Sigmoid colon (tissue), 7 donors: ENCODE measurements at regions of chr19 and their contacts with region 1.

Region 1: GRCh38 chr19:1651568-1652291 is 685 bp downstream of the TCF3 start:
- DNase-seq: peak; percentile 82
- H3K4me3 ChIP-seq: peak overlapping the region; percentile 49 to 98 (median 97)
- H3K27ac ChIP-seq: peak overlapping the region; percentile 60 to 99 (median 87)
- H3K4me1 ChIP-seq: peaks cover 0 to 24% (median 17%) of the 10 kb centered on the region in 4 donors
- H3K27me3 ChIP-seq: no peaks in the 10 kb centered on the region
- CTCF ChIP-seq: no peak
- EP300 ChIP-seq: no peak
- POLR2A ChIP-seq: no peak

Region 2: DNA sequence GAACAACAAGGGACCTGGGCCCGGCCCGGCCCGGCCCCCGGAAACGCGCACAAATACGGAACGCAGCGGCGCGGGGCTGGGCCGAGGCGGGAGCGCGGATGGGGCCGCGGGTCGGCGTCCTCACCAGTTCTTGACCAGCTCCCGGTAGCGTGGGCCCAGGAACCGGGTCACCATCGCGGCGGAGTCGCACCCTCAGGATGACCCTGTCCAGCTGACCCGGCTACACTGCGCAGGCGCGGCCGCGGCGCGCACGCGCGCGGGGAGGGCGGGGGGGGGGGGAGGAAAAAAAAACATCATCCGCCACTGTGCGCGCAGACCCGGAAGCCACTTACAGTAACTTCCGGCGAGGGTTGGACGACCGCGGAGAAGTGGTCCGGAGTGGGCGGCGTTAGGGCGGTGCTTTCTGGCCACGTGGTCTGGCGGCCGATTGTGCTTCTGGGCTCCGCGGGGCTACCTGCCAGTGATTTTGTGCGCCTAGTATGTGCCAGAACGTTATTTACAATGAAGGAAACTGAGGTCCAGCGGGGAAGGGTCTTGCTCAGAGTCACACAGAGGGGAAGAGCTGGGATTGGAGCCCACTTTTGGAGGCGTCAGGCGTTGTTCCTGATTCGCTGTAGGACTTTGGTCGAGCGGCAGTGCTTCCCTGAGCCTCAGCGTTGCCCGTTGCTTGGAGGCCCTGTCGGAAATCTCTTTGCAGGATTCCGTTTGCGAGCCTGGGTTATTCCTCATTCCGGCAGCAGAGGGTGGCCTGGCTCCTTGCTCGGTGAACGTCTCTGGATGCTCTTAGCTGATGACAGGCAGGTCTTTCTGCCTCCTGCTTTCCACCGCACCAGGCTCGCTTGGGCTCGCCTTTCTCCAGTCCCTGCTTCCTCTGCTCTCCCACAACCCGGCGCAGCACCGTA is 46.2 kb before region 1 on chr19 and contains the start of gene UQCR11:
- intact Hi-C with region 1: loop called (anchors 1 kb)
- DNase-seq: peak; percentile 98
- H3K4me3 ChIP-seq: peak within 1 kb of the TSS; percentile 87 to 98 (median 95)
- H3K27ac ChIP-seq: peak within 1 kb of the TSS; percentile 90 to 96 (median 94)
- H3K4me1 ChIP-seq: peaks cover 0 to 39% (median 36%) of the 10 kb centered on the region in 4 donors
- H3K27me3 ChIP-seq: no peaks in the 10 kb centered on the region
- CTCF ChIP-seq: peak; percentile 61 to 77 (median 66)
- EP300 ChIP-seq: no peak
- POLR2A ChIP-seq: peak in 1 of 2 donors; percentile 20
- total RNA-seq, gene UQCR11: 81.1 to 176 (median 122) TPM

Region 3: DNA sequence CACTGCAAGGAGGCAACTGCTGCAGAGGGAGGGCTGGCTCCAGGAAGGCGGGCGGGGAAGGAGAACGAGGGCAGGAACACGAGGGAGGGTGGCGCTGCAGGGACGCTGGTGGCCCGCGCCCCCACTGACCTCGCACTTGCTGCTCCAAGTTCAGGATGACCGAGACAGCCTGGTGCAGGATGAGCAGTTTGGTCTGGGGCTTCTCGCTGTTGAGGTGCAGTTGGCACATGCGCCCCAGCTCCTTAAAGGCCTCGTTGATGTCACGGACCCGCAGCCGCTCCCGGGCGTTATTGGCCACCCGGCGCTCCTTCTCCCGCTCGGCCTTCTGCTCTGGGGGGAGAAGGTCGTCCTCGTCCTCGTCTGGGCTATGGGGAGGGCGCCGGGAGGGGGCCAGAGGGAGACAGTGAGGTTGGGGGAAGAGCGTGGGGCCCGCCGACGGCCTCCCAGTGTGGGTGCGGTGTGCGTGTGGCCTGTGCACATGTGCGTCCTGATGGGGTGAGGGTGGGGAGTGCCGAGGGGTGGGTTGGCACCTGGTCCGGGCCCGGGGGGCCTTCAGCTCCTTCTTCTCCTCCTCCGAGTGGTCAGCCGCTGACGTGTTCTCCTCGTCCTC is 36.5 kb before region 1 on chr19:
- intact Hi-C with region 1: loop called (anchors 2 kb)
- DNase-seq: no peak
- H3K4me3 ChIP-seq: no peak overlapping the region
- H3K27ac ChIP-seq: peak overlapping the region in 3 of 4 donors; percentile 66 to 81 (median 76)
- H3K4me1 ChIP-seq: peaks cover 0 to 38% (median 23%) of the 10 kb centered on the region in 4 donors
- H3K27me3 ChIP-seq: no peaks in the 10 kb centered on the region
- CTCF ChIP-seq: no peak
- EP300 ChIP-seq: no peak
- POLR2A ChIP-seq: no peak